Dorsolateral prefrontal cortex (tissue), 120 donors: ENCODE measurements at regions of chr9 and their contacts with region 1.

Region 1: GRCh38 chr9:113221003-113221799 is at the starts of genes FKBP15 and SLC31A1:
- DNase-seq: peak; percentile 97 to 99 (median 99)
- H3K4me3 ChIP-seq: peak within 1 kb of the TSS; percentile 61 to 99 (median 85)
- H3K27ac ChIP-seq: peak within 1 kb of the TSS in 55 of 59 donors; percentile 45 to 96 (median 87)
- H3K27me3 ChIP-seq: no peaks in the 10 kb centered on the region
- CTCF ChIP-seq: peak in 40 of 56 donors; percentile 7 to 64 (median 30)
- total RNA-seq, gene FKBP15: 23.3 to 39.3 (median 31.2) TPM
- total RNA-seq, gene SLC31A1: 9.4 to 18.3 (median 13.9) TPM

Region 2: GRCh38 chr9:112844771-112845542 is 376.2 kb before region 1 on chr9:
- intact Hi-C with region 1: no loop called
- DNase-seq: peak in 9 of 10 donors; percentile 60 to 85 (median 79)
- H3K4me3 ChIP-seq: peak overlapping the region in 1 of 59 donors; percentile 17
- H3K27ac ChIP-seq: peak overlapping the region in 9 of 59 donors; percentile 3 to 67 (median 33)
- H3K27me3 ChIP-seq: no peaks in the 10 kb centered on the region
- CTCF ChIP-seq: peak; percentile 85 to 98 (median 95)

Region 3: GRCh38 chr9:112921549-112921948 is 299.7 kb before region 1 on chr9:
- intact Hi-C with region 1: loop called in 1 of 2 experiments (anchors 10 kb)
- DNase-seq: no peak
- H3K4me3 ChIP-seq: no peak overlapping the region
- H3K27ac ChIP-seq: no peak overlapping the region
- H3K27me3 ChIP-seq: no peaks in the 10 kb centered on the region
- CTCF ChIP-seq: peak in 52 of 56 donors; percentile 24 to 70 (median 52)

Region 4: DNA sequence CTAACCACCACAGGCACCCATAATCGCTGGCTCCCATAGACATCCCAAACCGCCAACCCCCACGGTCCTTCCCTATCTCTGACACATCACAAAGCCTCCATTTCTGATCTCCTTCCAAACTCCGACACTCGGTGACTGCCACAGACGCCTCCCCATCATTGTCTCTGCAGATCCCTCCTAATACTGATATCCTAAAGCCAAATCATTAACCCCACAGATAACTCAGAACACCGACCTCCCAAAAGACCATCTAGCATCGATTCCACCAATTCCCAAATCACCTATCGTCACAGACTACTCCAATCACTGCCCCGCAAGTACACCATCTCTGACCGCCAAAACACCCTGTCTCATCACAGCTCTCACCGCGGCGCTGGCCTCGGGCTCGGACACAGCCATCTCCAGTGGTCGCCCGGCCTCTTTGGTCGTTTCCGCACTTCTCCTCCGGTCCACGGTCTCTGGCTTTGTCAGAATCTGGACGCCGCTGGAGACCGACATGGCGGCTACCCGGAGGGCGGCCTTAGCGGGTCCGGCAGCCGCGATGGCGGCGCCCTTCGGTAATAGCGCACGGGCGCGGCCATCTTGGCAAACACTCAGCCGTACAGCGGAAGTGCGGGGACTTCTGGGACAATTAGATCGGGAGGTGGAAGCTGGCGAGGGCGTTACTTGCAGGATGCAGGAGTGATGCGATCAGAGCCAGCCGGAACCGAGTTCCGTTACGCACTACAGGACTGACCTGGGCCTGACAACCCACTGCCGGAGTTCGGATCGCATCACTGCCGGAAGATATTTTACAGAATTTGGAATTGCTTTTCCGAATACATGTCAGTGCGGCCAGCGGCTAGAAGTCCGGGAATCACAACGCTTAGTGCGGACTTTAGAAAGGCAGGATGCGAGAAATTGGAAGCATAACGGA is 164.8 kb before region 1 on chr9 and contains the start of gene ZFP37:
- intact Hi-C with region 1: loop called in 1 of 2 experiments (anchors 10 kb)
- DNase-seq: peak; percentile 85 to 97 (median 94)
- H3K4me3 ChIP-seq: peak within 1 kb of the TSS; percentile 47 to 96 (median 80)
- H3K27ac ChIP-seq: peak within 1 kb of the TSS in 58 of 59 donors; percentile 28 to 96 (median 82)
- H3K27me3 ChIP-seq: peaks cover 0 to 28% (median 12%) of the 10 kb centered on the region in 45 donors
- CTCF ChIP-seq: peak in 48 of 56 donors; percentile 14 to 67 (median 38)
- total RNA-seq, gene ZFP37: 4.6 to 12.8 (median 7.1) TPM

Region 5: GRCh38 chr9:113164536-113165300 is 56.5 kb before region 1 on chr9:
- intact Hi-C with region 1: loop called (anchors 5 kb)
- DNase-seq: peak; percentile 41 to 87 (median 76)
- H3K4me3 ChIP-seq: peak overlapping the region in 2 of 59 donors; percentile 2 to 20
- H3K27ac ChIP-seq: peak overlapping the region in 58 of 59 donors; percentile 11 to 99 (median 73)
- H3K27me3 ChIP-seq: no peaks in the 10 kb centered on the region
- CTCF ChIP-seq: peak in 2 of 56 donors; percentile 12 to 19

Region 6: GRCh38 chr9:113410207-113410864 is 189.1 kb after region 1 on chr9 and contains the starts of genes C9orf43 and POLE3:
- intact Hi-C with region 1: loop called in 1 of 2 experiments (anchors 5 kb)
- DNase-seq: peak; percentile 91 to 94 (median 92)
- H3K4me3 ChIP-seq: peak within 1 kb of the TSS; percentile 61 to 100 (median 91)
- H3K27ac ChIP-seq: peak within 1 kb of the TSS; percentile 92 to 100 (median 99)
- H3K27me3 ChIP-seq: no peaks in the 10 kb centered on the region
- CTCF ChIP-seq: peak in 31 of 56 donors; percentile 2 to 61 (median 20)
- total RNA-seq, gene C9orf43: 0.41 to 2.5 (median 1.2) TPM
- total RNA-seq, gene POLE3: 18.6 to 38.2 (median 27.0) TPM